ENCODE measurements at regions of chr19 and their contacts with region 1.

Region 1: DNA sequence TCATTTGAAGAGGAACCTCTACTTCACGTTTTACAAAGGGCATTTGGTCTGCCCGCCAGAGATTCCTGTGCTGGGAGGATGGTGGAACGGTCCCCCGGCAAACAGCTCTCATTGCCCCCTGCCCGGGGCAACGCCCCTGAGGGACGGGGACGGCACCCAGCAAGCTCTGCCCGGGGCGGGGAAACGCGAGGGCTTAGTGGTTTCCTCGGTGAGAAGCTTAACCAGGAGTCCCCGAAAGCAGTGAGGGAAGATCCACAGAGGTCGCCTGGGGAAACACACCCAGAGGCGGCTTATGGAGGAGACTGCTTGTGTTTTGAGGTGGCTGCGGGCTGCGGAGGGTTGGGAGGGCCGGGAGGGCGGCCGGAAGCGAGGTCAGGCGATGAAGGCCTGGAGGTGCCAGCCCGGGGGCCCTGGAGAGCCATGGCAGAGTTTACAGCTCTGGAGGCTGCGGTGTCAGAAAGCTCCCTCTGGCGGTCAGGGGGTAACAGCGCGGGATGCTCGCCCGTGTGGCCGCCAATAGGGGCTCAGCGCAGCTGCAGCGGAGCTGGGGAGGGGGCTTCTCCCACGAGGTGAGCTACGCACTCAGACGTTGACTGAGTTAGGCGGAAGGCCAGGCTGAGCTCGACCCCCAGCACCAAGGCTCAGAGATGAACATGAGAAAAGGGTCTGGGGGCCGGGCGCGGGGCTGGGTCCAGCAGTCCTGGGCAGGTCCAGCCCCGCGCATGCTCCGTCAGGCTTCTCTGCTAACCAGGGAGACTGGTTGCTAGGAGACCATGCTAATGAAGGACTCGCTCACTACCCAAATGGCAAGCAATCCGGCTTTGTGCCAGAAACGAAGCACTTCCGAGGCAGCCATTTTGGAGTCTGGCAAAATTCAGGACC is 652 bp upstream of the TPGS1 start:
- DNase-seq: peak; percentile 98
- CTCF ChIP-seq: peak; percentile 92

Region 2: GRCh38 chr19:294946-295686 is 211.5 kb before region 1 on chr19:
- CTCF ChIA-PET with region 1: interaction called, 10 read pairs
- POLR2A ChIA-PET with region 1: no interaction called
- DNase-seq: peak; percentile 77
- CTCF ChIP-seq: peak; percentile 87

Region 3: DNA sequence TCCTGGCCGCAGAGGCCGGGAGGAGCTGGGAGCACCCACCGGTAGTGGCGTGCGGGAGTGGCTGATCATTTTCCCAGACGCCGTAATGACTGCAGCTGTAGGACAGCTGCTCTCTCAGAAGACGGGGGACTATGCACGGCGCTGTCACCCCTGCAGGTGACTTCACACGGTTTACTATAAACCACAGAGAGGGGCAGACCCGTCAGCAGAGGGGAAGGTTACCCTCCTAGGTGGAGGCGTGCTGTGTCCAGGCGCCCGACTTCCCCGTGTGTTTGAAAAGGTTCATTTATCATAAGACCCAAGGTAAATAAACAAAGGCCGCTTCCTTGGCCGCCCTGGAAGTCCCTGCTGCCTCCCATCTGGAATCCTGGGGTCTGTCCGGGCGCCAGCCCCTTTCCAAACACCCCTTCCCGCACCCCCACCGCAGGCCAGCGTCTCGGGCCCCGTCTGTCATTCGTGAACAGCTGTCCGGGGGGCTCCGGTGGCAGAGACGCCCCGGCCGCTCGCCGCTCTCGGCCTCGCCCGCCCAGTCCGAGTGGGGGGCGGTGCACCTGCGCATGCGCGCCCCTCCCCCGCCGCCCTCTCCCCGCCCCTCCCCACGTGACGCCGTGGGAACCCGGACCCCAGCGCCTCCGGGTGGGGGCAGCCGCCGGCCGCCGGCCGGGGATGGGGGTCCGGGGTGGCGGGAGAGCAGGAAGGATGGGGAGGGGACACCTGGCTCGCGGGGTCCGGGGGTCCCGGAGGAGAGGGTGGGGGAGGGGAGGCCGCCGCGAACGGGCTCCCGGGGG is 46.7 kb before region 1 on chr19:
- CTCF ChIA-PET with region 1: no interaction called
- POLR2A ChIA-PET with region 1: no interaction called
- DNase-seq: no peak
- CTCF ChIP-seq: no peak

Region 4: DNA sequence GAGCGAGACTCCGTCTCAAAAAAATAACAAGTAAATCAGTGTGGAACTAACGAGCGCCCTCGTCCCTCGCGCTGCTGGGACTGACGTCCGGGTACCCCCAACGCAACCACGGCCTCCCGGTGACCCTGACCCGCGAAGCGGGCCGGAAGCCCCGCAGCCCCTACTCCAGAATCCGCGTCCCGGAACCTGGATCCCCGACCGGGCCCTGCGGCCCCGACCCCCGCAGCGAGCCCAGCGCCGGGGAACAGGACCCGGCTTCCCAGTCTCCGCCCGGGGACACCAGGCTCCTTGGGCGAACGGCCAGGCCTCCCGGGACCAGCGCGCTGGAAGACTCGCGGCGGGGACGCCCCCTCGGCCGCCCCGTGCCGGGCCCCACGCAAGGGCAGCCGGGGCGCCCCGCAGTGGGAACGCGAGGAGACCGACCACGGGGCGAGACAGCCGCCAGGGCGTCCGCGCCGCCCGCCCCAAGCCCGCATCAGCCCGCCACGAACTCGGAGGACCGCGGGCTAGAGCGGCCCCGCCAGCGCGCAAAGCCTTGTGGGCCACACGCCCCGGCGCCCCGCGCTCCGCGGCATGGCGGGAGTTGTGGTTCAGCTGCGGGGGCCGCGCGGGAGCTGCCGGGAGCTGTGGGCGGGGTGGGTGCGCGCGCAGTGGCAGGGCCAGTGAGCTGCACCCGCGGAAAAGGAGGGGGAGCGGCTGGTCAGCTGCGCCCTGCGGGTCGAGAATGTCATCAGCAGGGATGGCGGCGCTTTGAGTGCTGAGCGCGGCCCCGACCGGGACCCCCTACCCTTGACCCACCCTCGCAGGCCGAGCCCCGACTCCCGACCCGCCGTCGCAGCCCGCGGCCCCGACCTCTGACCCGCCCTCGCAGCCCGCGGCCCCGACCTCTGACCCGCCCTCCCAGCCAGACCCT is 17.9 kb before region 1 on chr19:
- CTCF ChIA-PET with region 1: interaction called, 14 read pairs
- POLR2A ChIA-PET with region 1: interaction called, 10 read pairs
- DNase-seq: peak; percentile 97
- CTCF ChIP-seq: no peak

Region 5: DNA sequence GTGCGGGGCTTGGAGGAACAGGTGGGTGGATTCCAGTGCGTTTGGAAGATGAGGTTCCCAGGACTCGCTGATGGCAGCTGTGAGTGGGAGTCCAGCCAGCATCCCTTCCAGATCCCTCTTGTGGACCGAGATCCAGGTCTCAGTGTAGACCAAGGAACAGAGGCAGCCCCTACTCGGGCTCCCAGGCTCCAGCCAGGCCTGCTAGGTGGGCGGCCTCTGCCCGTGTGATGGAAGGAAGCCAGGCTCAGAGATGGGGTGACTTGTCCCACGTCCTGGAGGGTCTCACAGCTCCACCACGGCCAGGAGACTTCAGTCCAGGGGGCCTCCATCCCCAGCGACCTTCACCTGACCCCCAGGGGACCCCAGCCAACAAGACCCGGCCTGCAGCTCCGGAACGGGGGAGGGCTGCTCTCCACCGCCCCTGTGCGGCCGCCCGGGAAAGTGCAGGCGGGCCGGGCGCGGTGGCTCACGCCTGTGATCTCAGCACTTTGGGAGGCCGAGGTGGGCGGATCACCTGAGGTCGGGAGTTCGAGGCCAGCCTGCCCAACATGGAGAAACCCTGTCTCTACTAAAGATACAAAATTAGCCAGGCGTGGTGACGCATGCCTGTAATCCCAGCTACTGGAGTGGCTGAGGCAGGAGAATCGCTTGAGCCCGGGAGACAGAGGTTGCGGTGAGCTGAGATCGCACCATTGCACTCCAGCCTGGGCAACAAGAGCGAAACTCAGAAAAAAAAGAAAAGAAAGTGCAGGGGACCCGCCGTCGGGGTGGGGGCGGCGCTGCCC is 11.1 kb before region 1 on chr19:
- CTCF ChIA-PET with region 1: interaction called, 18 read pairs
- POLR2A ChIA-PET with region 1: no interaction called
- DNase-seq: peak; percentile 54
- CTCF ChIP-seq: peak; percentile 62

Region 6: GRCh38 chr19:518603-519231 is 12.1 kb after region 1 on chr19:
- CTCF ChIA-PET with region 1: interaction called, 48 read pairs
- POLR2A ChIA-PET with region 1: no interaction called
- DNase-seq: no peak
- CTCF ChIP-seq: peak; percentile 16

Region 7: GRCh38 chr19:525029-525719 is 18.5 kb after region 1 on chr19:
- CTCF ChIA-PET with region 1: interaction called, 79 read pairs
- POLR2A ChIA-PET with region 1: no interaction called
- DNase-seq: no peak
- CTCF ChIP-seq: no peak

Region 8: DNA sequence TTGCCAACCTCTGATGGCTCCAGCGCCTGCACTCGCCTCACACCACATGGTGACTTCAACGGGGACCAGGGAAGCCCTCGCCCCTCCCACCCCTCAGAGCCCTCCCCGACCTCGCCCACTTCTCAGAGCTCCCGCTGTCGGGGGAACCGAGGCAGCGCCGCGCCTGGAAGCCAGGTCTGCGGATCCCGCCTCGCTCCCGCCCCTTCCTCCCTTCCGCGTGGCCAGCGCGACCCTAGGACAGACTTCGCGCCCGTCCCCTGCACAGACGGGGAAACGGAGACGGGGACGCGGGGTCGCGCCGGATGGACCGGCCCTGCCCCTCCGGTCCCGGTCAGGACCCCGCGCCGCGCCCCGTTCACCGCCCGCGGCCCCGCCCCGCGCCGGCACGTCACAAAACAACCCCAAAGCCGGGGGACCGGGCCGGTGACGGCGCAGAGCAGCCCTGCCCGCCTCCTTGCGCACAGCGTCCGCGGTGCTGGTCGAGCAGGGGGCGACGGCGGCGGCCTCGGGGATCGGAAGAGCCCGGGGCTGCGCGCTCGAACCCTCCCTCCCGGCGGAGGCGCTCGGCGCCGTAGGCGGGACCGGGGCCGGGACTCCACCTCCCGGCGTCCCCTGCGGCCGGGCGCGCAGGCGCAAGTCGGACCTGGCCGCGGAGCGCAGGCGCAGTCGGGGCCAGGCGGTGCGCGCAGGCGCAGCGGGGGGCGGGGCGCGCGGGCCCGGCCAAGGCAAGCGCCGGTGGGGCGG is 24.5 kb after region 1 on chr19:
- CTCF ChIA-PET with region 1: interaction called, 79 read pairs
- POLR2A ChIA-PET with region 1: interaction called, 11 read pairs
- DNase-seq: peak; percentile 99
- CTCF ChIP-seq: no peak